AG04450 (cell line): ENCODE measurements at regions of chr7 and their contacts with region 1.

Region 1: DNA sequence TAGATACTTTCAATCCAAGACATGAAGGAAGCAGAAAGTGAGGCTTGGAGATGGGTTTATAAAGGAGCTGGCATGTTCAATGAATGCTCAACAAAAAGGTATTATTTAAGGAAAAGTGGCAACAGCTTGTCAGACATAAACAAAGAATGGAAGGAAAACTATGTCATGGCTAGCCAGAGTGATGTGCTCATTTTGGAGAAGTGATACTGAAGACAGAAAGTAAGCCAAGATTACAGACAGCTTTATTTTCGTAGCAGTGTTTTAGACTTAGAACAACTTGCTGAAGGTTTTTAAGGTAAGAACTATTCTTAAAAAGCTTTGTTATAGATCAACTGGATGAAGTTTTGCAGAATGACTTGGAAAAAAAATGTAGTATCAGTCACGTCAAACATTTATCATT is 160.5 kb upstream of the FERD3L start:
- DNase-seq: no peak
- H3K4me3 ChIP-seq: no peak overlapping the region
- H3K27ac ChIP-seq: no peak overlapping the region
- H3K27me3 ChIP-seq: no peaks in the 10 kb centered on the region
- CTCF ChIP-seq: no peak

Region 2: GRCh38 chr7:19268737-19269136 is 37.0 kb before region 1 on chr7:
- CTCF ChIA-PET with region 1: interaction called, 11 read pairs
- POLR2A ChIA-PET with region 1: no interaction called
- DNase-seq: no peak
- H3K4me3 ChIP-seq: no peak overlapping the region
- H3K27ac ChIP-seq: no peak overlapping the region
- H3K27me3 ChIP-seq: no peaks in the 10 kb centered on the region
- CTCF ChIP-seq: no peak

Region 3: DNA sequence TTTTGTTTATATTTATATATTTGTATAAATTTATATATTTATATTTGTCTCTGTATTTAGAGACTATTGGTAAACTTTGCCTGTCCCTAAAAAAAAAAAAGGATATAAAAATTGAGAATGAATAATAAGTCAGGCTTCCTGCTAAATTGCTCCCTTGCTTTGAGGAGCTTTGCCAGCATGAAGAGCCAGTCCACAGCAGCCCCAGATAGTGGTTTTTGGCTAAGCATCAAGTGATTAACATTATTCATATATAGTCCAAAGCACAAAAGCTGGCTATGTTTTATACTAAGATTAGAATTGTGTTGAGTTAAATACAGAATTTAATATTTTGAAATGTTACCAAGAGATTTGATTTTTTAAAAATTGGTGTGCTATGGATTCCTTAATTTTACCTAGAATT is 104.4 kb after region 1 on chr7:
- CTCF ChIA-PET with region 1: no interaction called
- POLR2A ChIA-PET with region 1: no interaction called
- DNase-seq: no peak
- H3K4me3 ChIP-seq: no peak overlapping the region
- H3K27ac ChIP-seq: no peak overlapping the region
- H3K27me3 ChIP-seq: no peaks in the 10 kb centered on the region
- CTCF ChIP-seq: no peak

Region 4: GRCh38 chr7:19421871-19422270 is 116.2 kb after region 1 on chr7:
- CTCF ChIA-PET with region 1: no interaction called
- POLR2A ChIA-PET with region 1: no interaction called
- DNase-seq: no peak
- H3K4me3 ChIP-seq: no peak overlapping the region
- H3K27ac ChIP-seq: no peak overlapping the region
- H3K27me3 ChIP-seq: no peaks in the 10 kb centered on the region
- CTCF ChIP-seq: no peak